ENCODE measurements at regions of chr1 and their contacts with region 1.

Region 1: DNA sequence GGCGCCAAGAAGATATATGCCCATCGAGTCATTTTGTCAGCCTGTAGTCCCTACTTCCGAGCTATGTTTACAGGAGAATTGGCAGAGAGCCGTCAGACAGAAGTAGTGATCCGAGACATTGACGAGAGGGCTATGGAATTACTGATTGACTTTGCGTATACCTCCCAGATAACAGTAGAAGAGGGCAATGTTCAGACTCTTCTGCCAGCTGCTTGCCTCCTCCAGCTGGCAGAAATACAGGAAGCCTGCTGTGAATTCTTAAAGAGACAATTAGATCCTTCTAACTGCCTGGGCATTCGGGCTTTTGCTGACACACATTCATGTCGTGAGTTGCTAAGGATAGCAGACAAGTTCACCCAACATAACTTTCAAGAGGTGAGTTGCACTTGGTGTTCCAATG is 19.1 kb downstream of the KLHL20 start:
- DNase-seq: no peak
- ATAC-seq: no peak
- H3K4me3 ChIP-seq: no peak overlapping the region
- H3K27ac ChIP-seq: no peak overlapping the region
- H3K4me1 ChIP-seq: no peaks in the 10 kb centered on the region
- H3K27me3 ChIP-seq: no peaks in the 10 kb centered on the region
- CTCF ChIP-seq: no peak

Region 2: DNA sequence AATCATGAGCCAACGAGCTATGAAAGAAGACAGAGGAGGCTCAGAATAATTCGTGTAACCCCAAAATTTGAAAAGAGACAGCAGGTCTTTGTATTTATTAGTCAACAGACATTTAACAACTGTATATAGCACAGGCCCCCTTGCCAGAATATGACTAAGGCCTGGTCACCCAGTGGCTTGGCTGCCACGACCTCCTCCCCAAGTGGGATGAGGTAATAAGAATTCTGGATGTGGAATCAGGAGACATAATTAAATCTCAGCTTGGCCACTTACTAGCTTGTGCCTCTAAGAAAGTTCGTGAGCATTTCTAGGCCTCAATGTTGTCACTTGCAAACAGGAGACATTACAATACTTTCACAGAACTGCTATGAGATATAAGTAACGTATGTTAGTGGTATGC is 392.6 kb before region 1 on chr1:
- CTCF ChIA-PET with region 1: no interaction called
- POLR2A ChIA-PET with region 1: interaction called, 11 read pairs
- intact Hi-C with region 1: no loop called
- DNase-seq: peak; percentile 98
- ATAC-seq: peak; percentile 96
- H3K4me3 ChIP-seq: no peak overlapping the region
- H3K27ac ChIP-seq: peak overlapping the region; percentile 5; the same call in 1 of the 2 replicates
- H3K4me1 ChIP-seq: peaks cover 14% of the 10 kb centered on the region
- H3K27me3 ChIP-seq: no peaks in the 10 kb centered on the region
- CTCF ChIP-seq: no peak

Region 3: DNA sequence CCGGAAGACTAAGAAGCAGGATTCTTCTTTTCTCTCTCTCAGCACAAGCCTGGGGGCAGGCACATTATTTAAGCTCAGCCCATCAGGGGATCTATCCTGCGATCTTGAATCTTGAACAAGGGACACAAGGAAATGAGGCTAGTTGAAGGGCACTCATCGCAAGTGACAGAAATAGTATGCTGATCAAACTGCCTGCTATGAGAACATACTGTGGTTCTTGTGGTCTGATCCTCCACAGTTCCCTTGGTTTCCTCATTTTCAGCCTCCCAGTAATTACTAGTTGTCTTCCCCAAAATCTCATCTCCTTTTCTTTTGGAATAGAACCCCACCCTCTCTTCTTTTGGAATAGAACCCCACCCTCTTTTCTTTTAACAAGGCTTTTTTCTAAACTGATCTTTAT is 70.8 kb before region 1 on chr1:
- CTCF ChIA-PET with region 1: no interaction called
- POLR2A ChIA-PET with region 1: no interaction called
- intact Hi-C with region 1: no loop called
- DNase-seq: no peak
- ATAC-seq: no peak
- H3K4me3 ChIP-seq: no peak overlapping the region
- H3K27ac ChIP-seq: no peak overlapping the region
- H3K4me1 ChIP-seq: peaks cover 10% of the 10 kb centered on the region
- H3K27me3 ChIP-seq: no peaks in the 10 kb centered on the region
- CTCF ChIP-seq: no peak